Pancreas (tissue), 10 donors: ENCODE measurements at regions of chr11 and their contacts with region 1.

Region 1: GRCh38 chr11:130434521-130435223 is 6.3 kb upstream of the ADAMTS8 start:
- DNase-seq: peak; percentile 61 to 78 (median 73)
- ATAC-seq: peak; percentile 92 to 97 (median 96)
- H3K4me3 ChIP-seq: peak overlapping the region; percentile 15 to 57 (median 33)
- H3K27ac ChIP-seq: no peak overlapping the region
- H3K4me1 ChIP-seq: no peaks in the 10 kb centered on the region
- H3K27me3 ChIP-seq: peaks cover 0 to 6% (median 2%) of the 10 kb centered on the region in 4 donors
- CTCF ChIP-seq: peak; percentile 13 to 89 (median 67)

Region 2: DNA sequence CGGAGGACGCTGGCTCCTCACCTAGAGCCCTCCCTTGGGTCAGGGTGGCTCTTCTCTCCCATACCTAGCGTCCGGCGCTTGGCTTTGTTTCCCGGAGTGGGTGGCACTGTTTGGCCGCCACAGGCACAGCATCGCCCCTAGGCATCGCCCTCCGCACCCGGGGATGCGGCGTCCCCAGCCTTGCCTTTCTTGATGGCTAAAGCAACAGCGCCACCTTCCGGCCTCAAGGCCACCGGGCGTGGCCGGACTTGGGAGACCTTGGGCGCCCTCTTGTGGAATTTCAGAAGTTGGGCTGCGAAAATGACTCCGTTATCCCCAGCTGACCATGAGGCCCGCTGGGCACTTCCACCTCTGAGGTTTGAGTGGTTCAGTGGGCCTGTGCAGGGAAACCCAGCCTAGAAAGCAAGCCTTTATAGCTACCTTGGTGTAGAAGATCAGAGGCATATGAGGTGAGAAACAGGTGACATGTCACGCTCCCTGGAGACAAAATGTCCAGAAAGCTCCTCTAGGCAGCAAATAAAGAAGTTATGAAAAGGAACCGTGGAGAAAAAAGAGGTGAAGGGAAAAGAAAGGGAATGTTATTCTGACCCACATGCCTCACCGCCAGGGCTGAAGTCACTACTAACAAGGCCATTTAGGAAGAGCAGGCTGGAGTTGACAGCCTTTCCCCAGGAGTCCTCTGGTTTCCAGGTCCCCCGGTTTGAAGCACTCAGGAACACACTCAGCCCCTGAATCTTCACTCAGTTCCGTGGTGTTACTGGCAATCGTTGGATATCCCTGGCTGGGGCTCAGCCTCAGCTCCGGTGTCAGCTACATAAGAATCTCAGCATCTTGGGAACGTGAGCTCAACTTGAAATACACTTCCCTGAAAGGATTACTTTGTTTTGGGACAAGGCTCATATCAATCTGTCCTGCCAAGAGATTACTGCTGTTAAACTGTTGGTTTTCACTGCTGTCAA is 427.5 kb after region 1 on chr11:
- intact Hi-C with region 1: loop called (anchors 5 to 10 kb)
- DNase-seq: peak; percentile 79 to 97 (median 92)
- ATAC-seq: peak; percentile 78 to 99 (median 92)
- H3K4me3 ChIP-seq: no peak overlapping the region
- H3K27ac ChIP-seq: no peak overlapping the region
- H3K4me1 ChIP-seq: peaks cover 0 to 4% (median 0%) of the 10 kb centered on the region in 3 donors
- H3K27me3 ChIP-seq: no peaks in the 10 kb centered on the region
- CTCF ChIP-seq: peak; percentile 96 to 100 (median 100)